ENCODE measurements at regions of chr13 and their contacts with region 1.

Region 1: GRCh38 chr13:32737111-32737571 is 150.9 kb downstream of the PDS5B start:
- DNase-seq: no peak
- H3K4me3 Mint-ChIP-seq: peak overlapping the region; percentile 68
- H3K27ac Mint-ChIP-seq: peak overlapping the region; percentile 61
- H3K4me1 Mint-ChIP-seq: peaks cover 38% of the 10 kb centered on the region
- H3K27me3 Mint-ChIP-seq: no peaks in the 10 kb centered on the region

Region 2: GRCh38 chr13:32682740-32683139 is 54.4 kb before region 1 on chr13:
- intact Hi-C with region 1: loop called (anchors 10 kb)
- DNase-seq: no peak
- H3K4me3 Mint-ChIP-seq: no peak overlapping the region
- H3K27ac Mint-ChIP-seq: peak overlapping the region; percentile 23
- H3K4me1 Mint-ChIP-seq: peaks cover 6% of the 10 kb centered on the region
- H3K27me3 Mint-ChIP-seq: no peaks in the 10 kb centered on the region

Region 3: GRCh38 chr13:32720026-32720425 is 17.1 kb before region 1 on chr13:
- intact Hi-C with region 1: no loop called
- DNase-seq: no peak
- H3K4me3 Mint-ChIP-seq: no peak overlapping the region
- H3K27ac Mint-ChIP-seq: no peak overlapping the region
- H3K4me1 Mint-ChIP-seq: peaks cover 13% of the 10 kb centered on the region
- H3K27me3 Mint-ChIP-seq: no peaks in the 10 kb centered on the region